SK-N-SH (cell line): ENCODE measurements at regions of chr2 and their contacts with region 1.

Region 1: GRCh38 chr2:69375494-69376353 is 11.3 kb downstream of the GFPT1 start:
- DNase-seq: peak; percentile 49
- H3K4me3 ChIP-seq: no peak overlapping the region; a peak in 1 of 4 replicates
- H3K27ac ChIP-seq: peak overlapping the region in 1 of 2 experiments; percentile 8; a peak in 1 of 4 replicates
- H3K4me1 ChIP-seq: no peaks in the 10 kb centered on the region; a peak in 1 of 4 replicates
- H3K27me3 ChIP-seq: no peaks in the 10 kb centered on the region
- CTCF ChIP-seq: peak; percentile 73
- EP300 ChIP-seq: no peak
- RAD21 ChIP-seq: peak; percentile 60

Region 2: GRCh38 chr2:69073928-69074570 is 301.7 kb before region 1 on chr2:
- CTCF ChIA-PET with region 1: no interaction called
- POLR2A ChIA-PET with region 1: no interaction called
- DNase-seq: no peak
- H3K4me3 ChIP-seq: no peak overlapping the region
- H3K27ac ChIP-seq: peak overlapping the region in 1 of 2 experiments; percentile 7; a peak in 1 of 4 replicates
- H3K4me1 ChIP-seq: peaks cover 0 to 4% of the 10 kb centered on the region in 2 experiments; a peak in 2 of 4 replicates
- H3K27me3 ChIP-seq: no peaks in the 10 kb centered on the region
- CTCF ChIP-seq: no peak
- EP300 ChIP-seq: no peak
- RAD21 ChIP-seq: no peak

Region 3: GRCh38 chr2:69356471-69356870 is 19.3 kb before region 1 on chr2:
- CTCF ChIA-PET with region 1: interaction called, 12 read pairs
- POLR2A ChIA-PET with region 1: no interaction called
- DNase-seq: no peak
- H3K4me3 ChIP-seq: no peak overlapping the region
- H3K27ac ChIP-seq: no peak overlapping the region
- H3K4me1 ChIP-seq: peaks cover 0 to 8% of the 10 kb centered on the region in 2 experiments; a peak in 1 of 4 replicates
- H3K27me3 ChIP-seq: no peaks in the 10 kb centered on the region
- CTCF ChIP-seq: no peak
- EP300 ChIP-seq: no peak
- RAD21 ChIP-seq: no peak

Region 4: DNA sequence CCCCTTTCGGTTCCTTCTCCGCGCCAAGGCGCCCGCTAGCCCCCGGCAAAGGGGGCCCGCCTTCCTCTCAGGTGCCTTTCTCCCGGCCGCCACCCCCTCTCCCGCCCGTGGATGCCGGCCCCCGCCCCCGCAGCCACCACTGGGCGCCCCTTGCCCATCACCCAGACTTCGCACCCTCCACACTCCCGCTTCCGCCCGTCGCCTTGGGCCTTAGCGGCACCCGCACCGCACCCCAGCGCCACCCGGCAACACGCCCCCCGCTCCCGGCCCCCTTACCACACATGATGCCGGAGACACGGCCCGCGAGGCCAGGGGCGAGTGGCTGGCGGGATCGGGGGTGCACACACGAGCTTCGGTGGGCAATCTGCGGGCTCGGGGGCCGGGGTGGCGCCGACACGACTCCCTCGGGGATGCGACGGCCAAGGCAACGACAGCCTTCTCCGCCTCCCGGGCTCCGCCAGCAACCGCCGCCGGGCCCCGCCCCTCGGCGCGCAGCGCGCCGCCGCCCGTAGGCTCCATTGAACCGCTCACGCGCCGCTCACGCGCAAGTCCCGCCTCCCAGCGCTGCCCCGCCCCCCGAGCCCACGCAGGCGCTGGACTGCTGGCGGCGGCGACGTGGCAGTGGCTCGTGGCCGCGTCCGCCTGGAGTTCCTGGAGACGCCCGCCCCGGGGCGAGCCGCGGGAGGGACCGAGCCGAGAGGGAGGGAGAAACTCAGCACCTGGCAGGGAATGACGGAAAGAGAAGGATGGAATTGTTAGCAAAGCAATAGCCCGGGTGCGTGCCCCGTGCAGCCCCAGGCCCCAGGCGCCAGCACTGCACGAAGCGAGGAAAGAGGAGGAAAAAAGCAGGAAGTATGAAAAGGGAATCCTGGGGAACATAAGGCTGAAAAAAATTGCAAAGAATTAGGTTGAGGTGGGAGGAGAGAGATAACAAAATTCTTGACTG is 11.3 kb after region 1 on chr2 and contains the start of gene GFPT1:
- CTCF ChIA-PET with region 1: interaction called, 36 read pairs
- POLR2A ChIA-PET with region 1: no interaction called
- DNase-seq: peak; percentile 97
- H3K4me3 ChIP-seq: peak within 1 kb of the TSS; percentile 77 to 92
- H3K27ac ChIP-seq: peak within 1 kb of the TSS; percentile 79 to 90
- H3K4me1 ChIP-seq: peaks cover 6 to 19% of the 10 kb centered on the region in 2 experiments; a peak in 3 of 4 replicates
- H3K27me3 ChIP-seq: no peaks in the 10 kb centered on the region
- CTCF ChIP-seq: no peak
- EP300 ChIP-seq: 0 out of 4 replicates have a peak, but pooled peaks of 1 of the 2 experiments have one; percentile 15
- RAD21 ChIP-seq: no peak
- polyA plus RNA-seq, gene GFPT1: 6.0 and 6.8 TPM in 2 replicates

Region 5: DNA sequence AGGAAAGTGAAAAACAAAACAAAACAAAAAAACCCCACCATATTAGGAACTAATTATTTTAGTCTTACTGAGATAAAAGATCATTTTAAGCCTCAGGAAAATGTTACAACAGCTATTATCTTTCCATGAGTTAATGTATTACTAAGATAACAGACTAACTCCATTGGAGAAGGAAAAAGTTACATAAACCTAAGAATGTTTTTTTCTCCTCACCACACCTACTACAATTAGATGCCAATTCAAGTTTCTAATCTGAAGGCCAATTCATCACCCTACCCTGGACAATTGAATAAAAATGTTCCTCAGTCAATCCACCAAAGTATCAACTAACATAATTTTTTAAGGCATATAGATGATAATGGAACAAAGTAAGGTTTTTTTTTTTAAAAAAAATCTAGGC is 21.5 kb after region 1 on chr2:
- CTCF ChIA-PET with region 1: no interaction called
- POLR2A ChIA-PET with region 1: no interaction called
- DNase-seq: no peak
- H3K4me3 ChIP-seq: no peak overlapping the region
- H3K27ac ChIP-seq: no peak overlapping the region
- H3K4me1 ChIP-seq: no peaks in the 10 kb centered on the region
- H3K27me3 ChIP-seq: no peaks in the 10 kb centered on the region
- CTCF ChIP-seq: no peak
- EP300 ChIP-seq: no peak
- RAD21 ChIP-seq: no peak

Region 6: GRCh38 chr2:69464575-69464974 is 88.9 kb after region 1 on chr2:
- CTCF ChIA-PET with region 1: no interaction called
- POLR2A ChIA-PET with region 1: no interaction called
- DNase-seq: no peak
- H3K4me3 ChIP-seq: no peak overlapping the region
- H3K27ac ChIP-seq: no peak overlapping the region; a peak in 1 of 4 replicates
- H3K4me1 ChIP-seq: no peaks in the 10 kb centered on the region; a peak in 1 of 4 replicates
- H3K27me3 ChIP-seq: no peaks in the 10 kb centered on the region
- CTCF ChIP-seq: no peak
- EP300 ChIP-seq: no peak
- RAD21 ChIP-seq: no peak

Region 7: GRCh38 chr2:69829256-69830046 is 453.7 kb after region 1 on chr2 and contains the start of gene GMCL1:
- CTCF ChIA-PET with region 1: no interaction called
- POLR2A ChIA-PET with region 1: no interaction called
- DNase-seq: peak; percentile 94
- H3K4me3 ChIP-seq: peak within 1 kb of the TSS; percentile 82 to 95
- H3K27ac ChIP-seq: peak within 1 kb of the TSS; percentile 87 to 95
- H3K4me1 ChIP-seq: peaks cover 10 to 11% of the 10 kb centered on the region in 2 experiments
- H3K27me3 ChIP-seq: no peaks in the 10 kb centered on the region
- CTCF ChIP-seq: no peak
- EP300 ChIP-seq: no peak
- RAD21 ChIP-seq: no peak
- polyA plus RNA-seq, gene GMCL1: 5.3 and 6.2 TPM in 2 replicates